ENCODE measurements at regions of chr12 and their contacts with region 1.

Region 1: GRCh38 chr12:85029456-85029855 is 6.6 kb downstream of the TSPAN19 start:
- DNase-seq: peak in 1 of 35 experiments; percentile 4
- ATAC-seq: no peak
- H3K4me3 ChIP-seq: no peak overlapping the region
- H3K4me3 Mint-ChIP-seq: no peak overlapping the region
- H3K27ac ChIP-seq: no peak overlapping the region
- H3K27ac Mint-ChIP-seq: no peak overlapping the region
- H3K4me1 ChIP-seq: no peaks in the 10 kb centered on the region
- H3K4me1 Mint-ChIP-seq: no peaks in the 10 kb centered on the region
- H3K27me3 ChIP-seq: no peaks in the 10 kb centered on the region
- H3K27me3 Mint-ChIP-seq: peaks cover 0 to 7% of the 10 kb centered on the region in 2 donors

Region 2: DNA sequence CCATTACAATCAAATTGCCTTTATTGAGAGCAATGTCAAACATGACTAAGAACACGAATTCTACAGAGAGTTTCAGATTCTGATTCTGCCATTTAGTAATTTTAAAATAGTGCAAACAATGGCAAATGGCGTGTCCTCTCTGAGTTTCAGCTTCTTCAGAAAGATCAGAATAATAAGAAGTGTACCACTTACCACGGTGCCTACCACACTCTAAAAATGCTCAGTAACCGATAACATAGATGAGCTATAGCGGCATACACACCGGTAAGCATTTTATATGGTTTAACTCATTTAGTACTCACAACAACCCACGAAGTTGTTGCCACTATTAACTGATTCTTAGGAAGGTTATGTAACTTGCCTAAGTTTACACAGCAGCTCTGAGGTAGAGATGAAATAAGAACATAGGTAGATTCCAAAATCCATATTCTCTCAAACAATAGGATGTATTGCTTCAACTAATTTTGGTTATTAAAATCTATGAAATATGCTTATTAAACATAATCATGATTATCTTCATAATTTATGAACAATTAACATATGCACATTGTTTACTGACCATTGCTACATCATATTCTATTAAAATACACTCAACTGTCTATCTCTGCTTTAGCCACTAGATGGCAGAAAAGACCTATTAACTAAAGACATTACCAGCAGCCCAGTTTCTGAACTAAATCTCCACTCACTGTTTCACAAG is 155.2 kb before region 1 on chr12:
- CTCF ChIA-PET with region 1: interaction called, 9 to 15 read pairs
- POLR2A ChIA-PET with region 1: no interaction called
- DNase-seq: peak in 1 of 35 experiments; percentile 47
- ATAC-seq: peak in 1 of 4 experiments; percentile 50
- H3K4me3 ChIP-seq: no peak overlapping the region
- H3K4me3 Mint-ChIP-seq: no peak overlapping the region
- H3K27ac ChIP-seq: no peak overlapping the region
- H3K27ac Mint-ChIP-seq: no peak overlapping the region
- H3K4me1 ChIP-seq: no peaks in the 10 kb centered on the region
- H3K4me1 Mint-ChIP-seq: no peaks in the 10 kb centered on the region
- H3K27me3 ChIP-seq: no peaks in the 10 kb centered on the region
- H3K27me3 Mint-ChIP-seq: no peaks in the 10 kb centered on the region

Region 3: GRCh38 chr12:85138833-85139232 is 109.4 kb after region 1 on chr12:
- CTCF ChIA-PET with region 1: no interaction called
- POLR2A ChIA-PET with region 1: no interaction called
- DNase-seq: no peak
- ATAC-seq: no peak
- H3K4me3 ChIP-seq: no peak overlapping the region
- H3K4me3 Mint-ChIP-seq: no peak overlapping the region
- H3K27ac ChIP-seq: no peak overlapping the region
- H3K27ac Mint-ChIP-seq: no peak overlapping the region
- H3K4me1 ChIP-seq: no peaks in the 10 kb centered on the region
- H3K4me1 Mint-ChIP-seq: no peaks in the 10 kb centered on the region
- H3K27me3 ChIP-seq: no peaks in the 10 kb centered on the region
- H3K27me3 Mint-ChIP-seq: no peaks in the 10 kb centered on the region

Region 4: DNA sequence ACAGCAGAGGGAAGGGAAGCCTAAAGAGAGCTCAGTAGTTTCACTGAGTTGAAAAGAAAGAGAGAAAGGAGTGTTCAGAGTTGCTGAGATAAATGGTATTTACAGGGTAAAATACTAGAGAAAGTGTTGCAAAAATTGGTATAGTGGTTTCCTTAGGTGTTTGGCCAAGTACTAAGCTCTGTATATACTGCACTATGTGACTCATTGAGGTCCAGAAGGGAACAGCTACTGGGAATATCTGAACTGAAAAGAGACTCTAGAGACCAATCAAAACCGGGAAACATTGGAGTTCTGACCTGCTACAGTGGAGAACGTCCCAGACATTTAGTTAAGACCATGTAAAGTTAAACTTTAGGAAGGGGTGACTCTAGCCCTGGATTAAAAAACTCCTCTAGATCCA is 207.9 kb after region 1 on chr12:
- CTCF ChIA-PET with region 1: no interaction called
- POLR2A ChIA-PET with region 1: no interaction called
- DNase-seq: no peak
- ATAC-seq: no peak
- H3K4me3 ChIP-seq: no peak overlapping the region
- H3K4me3 Mint-ChIP-seq: no peak overlapping the region
- H3K27ac ChIP-seq: no peak overlapping the region
- H3K27ac Mint-ChIP-seq: no peak overlapping the region
- H3K4me1 ChIP-seq: no peaks in the 10 kb centered on the region
- H3K4me1 Mint-ChIP-seq: no peaks in the 10 kb centered on the region
- H3K27me3 ChIP-seq: no peaks in the 10 kb centered on the region
- H3K27me3 Mint-ChIP-seq: no peaks in the 10 kb centered on the region